ENCODE measurements at regions of chr6 and their contacts with region 1.

Region 1: DNA sequence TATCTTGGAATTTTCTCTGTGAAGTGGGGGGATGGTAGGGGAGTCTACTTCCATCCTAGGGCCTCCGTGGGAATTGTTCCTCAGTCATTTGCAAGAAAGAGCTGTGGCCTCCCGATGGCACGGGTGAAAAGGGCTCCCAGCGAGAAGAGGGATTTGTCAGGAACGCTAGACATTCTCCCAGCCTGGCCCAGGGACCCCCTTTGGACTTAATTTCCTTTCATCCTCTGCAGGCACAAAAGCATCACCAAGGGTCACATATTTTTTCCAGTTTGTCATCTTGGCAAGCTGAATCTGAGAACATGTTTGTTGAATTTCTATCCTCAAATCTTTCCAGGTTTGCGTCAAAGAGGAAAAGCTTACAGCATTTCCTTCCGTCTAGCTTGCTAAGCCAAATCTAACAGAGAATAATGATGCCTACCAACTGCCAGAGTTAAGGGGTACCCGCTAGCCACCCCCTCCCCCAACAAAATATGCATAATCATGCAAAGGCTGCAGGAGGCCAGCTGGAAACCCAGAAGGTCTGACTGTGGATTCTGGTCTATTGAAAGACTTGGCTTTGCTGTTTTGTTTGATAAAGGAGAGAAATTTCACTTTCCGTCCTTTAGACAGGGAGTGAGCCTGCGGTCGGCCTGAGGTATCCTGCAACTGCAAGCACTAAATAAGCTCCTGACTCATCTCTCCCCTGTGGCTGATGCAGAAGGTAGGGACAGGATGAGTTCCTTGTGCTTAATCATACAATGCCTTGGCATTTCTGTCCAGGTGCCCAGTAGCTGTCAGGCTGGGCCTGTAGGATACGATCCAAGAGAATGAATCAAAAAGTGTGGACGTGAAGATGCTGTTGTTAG is 23.1 kb downstream of the PSMG4 start:
- DNase-seq: peak; percentile 46
- ATAC-seq: no peak
- H3K4me3 ChIP-seq: no peak overlapping the region
- H3K27ac ChIP-seq: peak overlapping the region; percentile 65
- H3K4me1 ChIP-seq: peaks cover 22% of the 10 kb centered on the region
- H3K27me3 ChIP-seq: no peaks in the 10 kb centered on the region
- CTCF ChIP-seq: no peak

Region 2: DNA sequence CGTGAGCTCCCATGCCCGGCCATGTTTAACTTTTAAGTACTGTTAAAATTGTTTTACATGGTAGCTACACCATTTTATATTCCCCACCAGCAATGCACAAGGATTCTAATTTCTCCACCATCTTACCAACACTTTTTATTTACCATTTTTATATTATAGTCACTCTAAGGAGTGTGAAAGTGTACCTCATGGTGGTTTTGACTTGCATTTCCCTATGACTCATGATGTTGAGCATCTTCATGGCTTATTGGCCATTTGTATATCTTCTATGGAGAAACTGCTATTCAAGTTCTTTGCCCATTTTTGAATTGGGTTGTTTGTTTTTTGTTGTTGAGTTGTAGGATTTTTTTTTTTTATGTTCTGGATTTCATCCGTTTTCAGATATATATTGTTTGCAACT is 179.0 kb before region 1 on chr6:
- intact Hi-C with region 1: no loop called
- DNase-seq: no peak
- ATAC-seq: no peak
- H3K4me3 ChIP-seq: no peak overlapping the region
- H3K27ac ChIP-seq: no peak overlapping the region
- H3K4me1 ChIP-seq: no peaks in the 10 kb centered on the region
- H3K27me3 ChIP-seq: no peaks in the 10 kb centered on the region
- CTCF ChIP-seq: no peak

Region 3: GRCh38 chr6:3118353-3119039 is 163.4 kb before region 1 on chr6 and contains the start of gene BPHL:
- intact Hi-C with region 1: no loop called
- DNase-seq: peak; percentile 99
- ATAC-seq: peak; percentile 99
- H3K4me3 ChIP-seq: peak within 1 kb of the TSS; percentile 77
- H3K27ac ChIP-seq: peak within 1 kb of the TSS; percentile 86
- H3K4me1 ChIP-seq: peaks cover 5% of the 10 kb centered on the region
- H3K27me3 ChIP-seq: no peaks in the 10 kb centered on the region
- CTCF ChIP-seq: no peak
- total RNA-seq, gene BPHL: 7.6 TPM

Region 4: DNA sequence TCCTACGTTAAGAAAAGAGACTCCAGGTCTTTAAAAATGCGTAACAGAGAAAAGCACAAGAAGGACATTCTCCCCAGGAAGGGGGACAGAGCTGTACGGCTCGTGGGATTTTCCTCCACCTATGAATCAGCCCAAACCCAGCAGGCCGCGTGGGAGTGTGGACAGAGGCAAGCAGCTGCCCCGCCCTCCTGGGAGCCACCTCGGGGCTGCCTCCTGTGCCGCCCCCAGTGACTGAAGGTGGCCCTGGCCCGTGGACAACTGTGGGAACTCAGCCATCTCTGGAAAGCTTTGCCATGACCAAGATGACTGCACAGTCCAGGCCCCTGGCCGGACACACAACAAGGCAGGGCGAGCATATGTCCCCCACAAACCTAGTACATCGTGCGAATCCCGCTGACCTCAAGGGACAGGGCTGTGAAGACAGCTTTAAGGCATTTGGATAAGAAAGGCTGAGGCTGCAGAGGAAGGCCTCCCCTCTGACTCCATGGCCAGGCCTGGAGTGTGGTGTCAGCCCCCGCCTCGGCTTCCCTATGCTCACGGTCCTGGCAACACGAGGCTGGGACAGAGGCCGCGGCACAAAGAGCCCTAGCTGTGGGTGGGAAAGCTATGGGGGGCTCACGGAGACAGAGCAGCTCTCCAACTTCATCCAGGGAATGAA is 442.7 kb after region 1 on chr6:
- intact Hi-C with region 1: loop called (anchors 5 kb)
- DNase-seq: no peak
- ATAC-seq: no peak
- H3K4me3 ChIP-seq: no peak overlapping the region
- H3K27ac ChIP-seq: no peak overlapping the region
- H3K4me1 ChIP-seq: peaks cover 6% of the 10 kb centered on the region
- H3K27me3 ChIP-seq: no peaks in the 10 kb centered on the region
- CTCF ChIP-seq: no peak

Measured in upper lobe of right lung (tissue), 1 donor.